ENCODE measurements at regions of chr4 and their contacts with region 1.

Region 1: GRCh38 chr4:89110986-89111832 is at the start of gene TIGD2:
- DNase-seq: peak; percentile 86
- H3K4me3 Mint-ChIP-seq: peak within 1 kb of the TSS; percentile 93
- H3K27ac Mint-ChIP-seq: peak within 1 kb of the TSS; percentile 77
- H3K4me1 Mint-ChIP-seq: peaks cover 26% of the 10 kb centered on the region
- H3K27me3 Mint-ChIP-seq: no peaks in the 10 kb centered on the region
- CTCF ChIP-seq: peak; percentile 60
- total RNA-seq, gene TIGD2: 9.8 and 11.4 TPM in 2 replicates

Region 2: DNA sequence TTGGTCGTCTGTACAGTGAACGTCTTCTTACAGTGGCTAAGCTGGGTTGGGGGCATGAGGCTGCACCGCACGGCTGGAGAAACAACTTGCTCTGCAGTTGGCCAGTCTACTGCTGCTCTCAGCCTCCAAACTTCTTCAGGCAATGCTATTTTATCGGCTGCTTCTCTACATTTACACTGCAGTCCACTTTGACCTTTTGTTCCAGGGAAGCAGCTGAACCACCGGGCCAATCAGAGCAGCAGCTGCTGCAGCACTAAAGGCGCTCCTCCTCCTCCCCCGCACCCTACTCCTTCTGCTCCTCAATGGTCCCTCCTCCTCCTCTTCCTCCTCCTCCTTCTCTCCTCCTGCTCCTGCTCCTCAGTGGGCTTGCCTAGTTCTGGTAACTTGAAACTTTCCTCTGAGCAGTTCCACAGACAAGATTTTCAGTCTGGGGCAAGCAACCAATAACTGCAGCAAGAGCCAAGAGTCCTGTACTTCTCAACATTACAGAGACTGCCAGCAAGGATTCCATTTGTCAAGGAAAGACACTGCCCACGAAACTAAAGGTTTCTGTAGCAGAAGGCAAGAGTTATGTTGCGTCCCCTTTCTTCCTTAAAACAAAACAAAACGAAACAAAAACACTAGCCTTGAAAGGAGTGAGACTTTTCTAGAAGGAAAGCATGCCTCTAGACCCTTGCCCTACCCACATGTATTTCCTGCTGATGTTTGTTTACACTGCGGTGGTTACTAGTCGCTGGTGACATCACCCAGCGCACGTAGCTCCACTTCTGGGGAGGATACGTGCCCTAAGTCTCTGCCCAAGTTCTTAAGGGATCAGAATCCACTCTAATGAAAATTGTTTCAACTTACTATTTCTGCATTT is 287.9 kb before region 1 on chr4:
- CTCF ChIA-PET with region 1: no interaction called
- intact Hi-C with region 1: loop called (anchors 5 kb)
- DNase-seq: peak; percentile 67
- H3K4me3 Mint-ChIP-seq: peak overlapping the region; percentile 80
- H3K27ac Mint-ChIP-seq: peak overlapping the region; percentile 93
- H3K4me1 Mint-ChIP-seq: peaks cover 8% of the 10 kb centered on the region
- H3K27me3 Mint-ChIP-seq: no peaks in the 10 kb centered on the region
- CTCF ChIP-seq: no peak

Region 3: GRCh38 chr4:89056953-89057398 is 54.2 kb before region 1 on chr4 and contains the start of gene FAM13A:
- CTCF ChIA-PET with region 1: no interaction called
- intact Hi-C with region 1: loop called (anchors 5 kb)
- DNase-seq: peak; percentile 62
- H3K4me3 Mint-ChIP-seq: peak within 1 kb of the TSS; percentile 75
- H3K27ac Mint-ChIP-seq: peak within 1 kb of the TSS; percentile 52
- H3K4me1 Mint-ChIP-seq: peaks cover 43% of the 10 kb centered on the region
- H3K27me3 Mint-ChIP-seq: no peaks in the 10 kb centered on the region
- CTCF ChIP-seq: no peak
- total RNA-seq, gene FAM13A: 12.1 and 13.5 TPM in 2 replicates

Measured in Calu3 (cell line).